Esophagus muscularis mucosa (tissue), 4 donors: ENCODE measurements at regions of chr1 and their contacts with region 1.

Region 1: DNA sequence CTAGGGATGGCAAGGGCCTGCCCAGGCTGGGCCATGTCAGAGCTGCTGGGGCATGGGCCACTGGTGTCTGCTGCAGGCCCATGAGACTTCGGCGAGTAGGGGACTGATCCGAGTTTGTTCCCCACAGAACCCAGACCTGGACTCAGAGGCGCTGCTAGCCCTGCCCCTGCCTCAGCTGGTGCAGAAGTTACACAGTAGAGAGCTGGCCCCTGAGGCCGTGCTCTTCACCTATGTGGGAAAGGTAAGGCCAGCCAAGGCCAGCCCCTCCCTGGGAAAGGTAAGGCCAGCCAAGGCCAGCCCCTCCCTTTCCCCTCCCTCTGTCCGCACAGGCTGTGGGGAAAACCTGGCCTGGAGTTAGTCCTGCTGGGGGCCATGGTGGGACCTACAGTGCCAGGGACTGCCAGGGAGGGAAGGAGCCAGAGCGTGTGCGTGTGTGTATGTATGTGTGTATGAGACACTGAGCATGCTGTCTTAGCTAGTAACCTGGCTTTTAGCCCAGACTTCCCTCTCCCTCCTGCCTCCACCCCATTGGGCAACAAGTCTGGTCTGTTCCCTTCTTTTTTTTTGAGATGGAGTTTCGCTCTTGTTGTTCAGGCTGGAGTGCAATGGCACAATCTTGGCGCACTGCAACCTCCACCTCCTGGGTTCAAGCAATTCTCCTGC is 8.0 kb downstream of the FAAH start:
- DNase-seq: no peak
- H3K4me3 ChIP-seq: peak overlapping the region in 1 of 4 donors; percentile 14
- H3K27ac ChIP-seq: peak overlapping the region in 3 of 4 donors; percentile 40 to 53 (median 45)
- H3K4me1 ChIP-seq: peaks cover 17 to 31% (median 27%) of the 10 kb centered on the region in 4 donors
- H3K27me3 ChIP-seq: no peaks in the 10 kb centered on the region
- CTCF ChIP-seq: no peak
- EP300 ChIP-seq: no peak
- POLR2A ChIP-seq: no peak

Region 2: GRCh38 chr1:46423574-46424240 is 21.6 kb after region 1 on chr1:
- intact Hi-C with region 1: loop called (anchors 1 kb)
- DNase-seq: no peak
- H3K4me3 ChIP-seq: no peak overlapping the region
- H3K27ac ChIP-seq: no peak overlapping the region
- H3K4me1 ChIP-seq: no peaks in the 10 kb centered on the region
- H3K27me3 ChIP-seq: peaks cover 0 to 55% (median 8%) of the 10 kb centered on the region in 4 donors
- CTCF ChIP-seq: no peak
- EP300 ChIP-seq: no peak
- POLR2A ChIP-seq: no peak

Region 3: DNA sequence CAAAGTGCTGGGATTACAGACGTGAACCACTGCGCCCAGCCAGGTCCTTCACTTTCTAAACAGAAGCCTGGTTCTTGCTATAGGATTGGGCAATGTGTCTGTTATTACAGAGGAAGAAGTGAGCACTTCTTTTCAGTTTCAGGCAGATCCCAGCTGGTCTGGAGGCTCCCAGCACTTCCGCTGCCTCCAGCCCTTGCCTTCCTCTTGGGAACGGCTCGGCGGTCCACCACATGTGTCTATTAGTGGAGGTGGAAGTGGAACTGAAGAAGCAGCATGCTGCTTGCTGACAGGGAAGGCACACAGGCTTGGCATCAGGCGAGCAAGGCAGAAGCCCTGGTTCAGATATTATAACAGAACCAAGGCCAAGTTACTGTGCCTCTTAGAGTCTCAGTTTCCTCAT is 185.0 kb after region 1 on chr1:
- intact Hi-C with region 1: no loop called
- DNase-seq: no peak
- H3K4me3 ChIP-seq: no peak overlapping the region
- H3K27ac ChIP-seq: no peak overlapping the region
- H3K4me1 ChIP-seq: no peaks in the 10 kb centered on the region
- H3K27me3 ChIP-seq: no peaks in the 10 kb centered on the region
- CTCF ChIP-seq: no peak
- EP300 ChIP-seq: no peak
- POLR2A ChIP-seq: no peak

Region 4: DNA sequence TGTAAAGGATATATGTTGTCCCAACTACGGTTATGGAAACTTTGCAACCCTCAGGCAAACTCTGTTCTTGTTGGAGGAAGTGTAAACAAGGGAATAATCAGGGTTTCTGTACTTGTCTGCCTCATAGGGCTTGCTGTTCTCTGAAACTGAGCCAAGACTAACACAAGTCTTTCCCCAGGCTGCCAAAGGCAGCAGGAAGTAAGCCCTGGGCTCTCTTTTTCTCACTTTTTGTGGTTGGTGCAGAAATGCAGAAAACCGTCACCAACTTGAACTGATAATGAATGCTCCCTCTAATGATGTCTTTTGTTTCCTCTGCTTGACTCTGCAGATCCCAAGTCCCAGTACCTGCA is 629.0 kb after region 1 on chr1:
- intact Hi-C with region 1: no loop called
- DNase-seq: peak; percentile 14
- H3K4me3 ChIP-seq: no peak overlapping the region
- H3K27ac ChIP-seq: peak overlapping the region in 1 of 4 donors; percentile 28
- H3K4me1 ChIP-seq: peaks cover 0 to 14% (median 9%) of the 10 kb centered on the region in 4 donors
- H3K27me3 ChIP-seq: peaks cover 0 to 5% (median 0%) of the 10 kb centered on the region in 4 donors
- CTCF ChIP-seq: no peak
- EP300 ChIP-seq: no peak
- POLR2A ChIP-seq: no peak